Activated naive CD4-positive, alpha-beta T cell treated with anti-CD3 and anti-CD28 coated beads for 36 hours (primary cell): ENCODE measurements at regions of chr11 and their contacts with region 1.

Region 1: DNA sequence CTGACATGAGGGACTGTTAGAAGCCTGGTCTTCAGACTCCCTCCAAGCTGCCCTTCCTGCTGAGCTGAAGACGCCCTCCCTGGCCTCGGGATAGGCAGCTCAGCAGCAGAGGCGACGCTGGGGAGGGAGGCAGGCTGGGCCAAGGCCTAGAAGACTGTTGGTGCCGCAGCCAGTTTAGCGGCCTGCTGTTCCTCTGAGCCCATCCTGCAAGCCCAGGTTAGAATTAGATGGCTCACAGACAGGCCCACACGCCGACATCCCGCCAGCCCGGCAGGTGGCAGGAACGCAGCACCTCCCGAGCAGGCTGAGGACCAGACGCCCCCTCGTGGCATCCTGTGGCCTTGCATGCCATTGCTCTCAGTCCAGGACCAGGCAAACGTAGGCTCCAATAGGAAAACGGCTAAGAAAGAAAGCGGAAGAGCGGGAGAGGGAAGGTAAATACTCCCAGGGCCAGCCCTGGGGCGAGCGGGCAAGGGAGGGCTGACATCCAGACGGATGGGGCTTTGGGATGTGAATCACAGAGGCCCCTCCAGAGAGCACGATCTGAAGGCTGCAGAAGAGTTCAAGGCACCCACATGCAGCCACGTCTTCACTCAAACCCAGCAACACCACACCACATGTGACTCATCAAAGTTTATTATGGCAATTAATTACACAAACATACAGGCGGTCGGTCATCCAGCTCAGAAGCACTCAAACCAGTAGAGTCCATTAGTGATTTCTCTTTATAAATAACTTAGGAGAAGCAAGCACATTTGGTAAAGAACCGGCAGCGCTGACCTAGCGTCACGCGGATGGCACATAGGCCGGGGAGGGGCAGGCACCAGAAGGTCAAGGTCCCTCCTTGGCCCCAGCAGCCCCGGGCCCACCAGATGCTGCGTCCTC is 27.6 kb downstream of the CD5 start:
- DNase-seq: peak; percentile 96
- H3K4me3 Mint-ChIP-seq: peak overlapping the region; percentile 2
- H3K27ac Mint-ChIP-seq: peak overlapping the region; percentile 50
- H3K4me1 Mint-ChIP-seq: peaks cover 21% of the 10 kb centered on the region
- H3K27me3 Mint-ChIP-seq: no peaks in the 10 kb centered on the region

Region 2: GRCh38 chr11:60775420-60775961 is 354.4 kb before region 1 on chr11:
- CTCF ChIA-PET with region 1: no interaction called
- intact Hi-C with region 1: loop called (anchors 1 kb)
- DNase-seq: peak; percentile 93
- H3K4me3 Mint-ChIP-seq: no peak overlapping the region
- H3K27ac Mint-ChIP-seq: no peak overlapping the region
- H3K4me1 Mint-ChIP-seq: peaks cover 7% of the 10 kb centered on the region
- H3K27me3 Mint-ChIP-seq: no peaks in the 10 kb centered on the region

Region 3: DNA sequence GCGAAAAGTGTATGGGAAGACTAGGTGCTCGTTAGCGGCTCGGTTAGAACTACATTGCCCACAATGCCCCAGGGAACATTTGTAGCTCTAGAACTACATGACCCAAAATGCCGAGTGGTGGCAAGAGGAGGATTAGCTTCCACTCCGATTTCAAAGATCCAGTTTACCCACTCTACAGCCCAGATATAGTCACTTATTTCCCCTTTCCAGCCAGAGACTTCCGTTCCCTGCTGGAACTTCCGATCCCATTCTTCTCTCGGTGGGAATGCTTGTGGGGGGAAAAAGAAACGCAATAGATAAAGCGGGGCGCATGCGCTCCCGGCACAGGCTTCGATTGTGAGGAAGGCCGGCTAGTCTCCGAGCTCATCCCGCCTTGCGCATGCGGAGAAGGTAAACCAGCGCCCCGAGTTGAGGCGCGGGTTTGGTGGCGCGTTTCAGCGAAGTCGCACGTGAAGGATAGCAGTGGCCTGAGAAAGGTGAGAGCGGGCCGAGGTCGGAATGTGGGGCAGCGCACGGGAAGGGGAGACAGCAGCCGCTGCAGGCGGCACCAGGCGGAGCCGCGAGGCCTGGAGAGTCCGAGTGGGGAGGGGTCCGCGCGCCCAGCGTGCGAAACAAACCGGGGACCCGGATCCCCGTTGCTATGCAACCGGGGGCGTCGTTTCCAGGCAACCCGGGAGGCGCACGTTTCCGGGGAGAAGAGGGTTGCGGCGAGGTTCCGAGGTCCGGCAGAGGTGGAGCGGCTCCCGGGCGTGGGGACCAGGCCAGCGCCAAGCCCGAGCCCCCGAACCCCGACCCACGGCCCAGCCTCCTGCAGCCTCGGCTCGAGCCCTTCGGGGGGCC is 215.9 kb before region 1 on chr11 and contains the start of gene TMEM109:
- CTCF ChIA-PET with region 1: interaction called, 10 read pairs
- intact Hi-C with region 1: loop called (anchors 1 kb)
- DNase-seq: peak; percentile 89
- H3K4me3 Mint-ChIP-seq: peak within 1 kb of the TSS; percentile 94
- H3K27ac Mint-ChIP-seq: peak within 1 kb of the TSS; percentile 95
- H3K4me1 Mint-ChIP-seq: peaks cover 62% of the 10 kb centered on the region
- H3K27me3 Mint-ChIP-seq: no peaks in the 10 kb centered on the region
- total RNA-seq, gene TMEM109: 94.0 to 103 TPM

Region 4: DNA sequence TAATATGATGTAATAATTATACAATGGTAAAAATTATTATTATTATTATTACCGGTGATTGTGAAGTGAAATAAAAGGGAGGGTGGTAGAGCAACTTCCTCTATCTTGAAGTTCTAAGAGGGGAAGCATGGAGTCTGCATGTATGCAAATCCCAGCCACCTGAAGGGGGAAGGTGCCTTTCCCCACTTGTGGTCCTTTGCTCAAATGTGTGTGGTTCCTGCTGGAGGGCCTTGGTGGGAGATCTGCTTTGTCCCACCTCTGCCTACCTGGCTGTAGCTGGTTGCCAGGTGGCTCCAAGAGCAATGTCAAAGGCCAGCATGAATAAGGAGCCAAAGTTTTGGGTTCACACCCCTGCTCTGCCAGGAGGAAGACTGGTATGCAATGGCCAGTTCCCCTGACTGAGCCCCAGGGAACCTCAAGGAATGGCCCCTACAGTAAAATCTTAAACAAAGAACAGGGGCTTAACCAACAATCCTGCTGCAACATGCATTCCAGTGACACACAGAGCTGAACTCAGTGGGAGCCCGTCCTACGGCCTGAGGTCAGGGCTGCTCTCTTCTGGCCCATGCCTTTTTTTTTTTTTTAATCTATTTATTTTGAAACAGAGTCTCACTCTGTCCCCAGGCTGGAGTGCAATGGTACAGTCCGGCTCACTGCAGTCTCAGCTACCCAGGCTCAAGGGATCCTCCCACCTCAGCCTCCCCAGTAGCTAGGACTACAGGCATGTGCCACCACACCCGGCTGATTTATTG is 197.1 kb before region 1 on chr11:
- CTCF ChIA-PET with region 1: no interaction called
- intact Hi-C with region 1: no loop called
- DNase-seq: no peak
- H3K4me3 Mint-ChIP-seq: no peak overlapping the region
- H3K27ac Mint-ChIP-seq: no peak overlapping the region
- H3K4me1 Mint-ChIP-seq: no peaks in the 10 kb centered on the region
- H3K27me3 Mint-ChIP-seq: no peaks in the 10 kb centered on the region

Region 5: GRCh38 chr11:61021661-61022212 is 108.1 kb before region 1 on chr11:
- CTCF ChIA-PET with region 1: interaction called, 10 read pairs
- intact Hi-C with region 1: no loop called
- DNase-seq: peak; percentile 97
- H3K4me3 Mint-ChIP-seq: peak overlapping the region; percentile 81
- H3K27ac Mint-ChIP-seq: peak overlapping the region; percentile 100
- H3K4me1 Mint-ChIP-seq: peaks cover 78% of the 10 kb centered on the region
- H3K27me3 Mint-ChIP-seq: no peaks in the 10 kb centered on the region

Region 6: DNA sequence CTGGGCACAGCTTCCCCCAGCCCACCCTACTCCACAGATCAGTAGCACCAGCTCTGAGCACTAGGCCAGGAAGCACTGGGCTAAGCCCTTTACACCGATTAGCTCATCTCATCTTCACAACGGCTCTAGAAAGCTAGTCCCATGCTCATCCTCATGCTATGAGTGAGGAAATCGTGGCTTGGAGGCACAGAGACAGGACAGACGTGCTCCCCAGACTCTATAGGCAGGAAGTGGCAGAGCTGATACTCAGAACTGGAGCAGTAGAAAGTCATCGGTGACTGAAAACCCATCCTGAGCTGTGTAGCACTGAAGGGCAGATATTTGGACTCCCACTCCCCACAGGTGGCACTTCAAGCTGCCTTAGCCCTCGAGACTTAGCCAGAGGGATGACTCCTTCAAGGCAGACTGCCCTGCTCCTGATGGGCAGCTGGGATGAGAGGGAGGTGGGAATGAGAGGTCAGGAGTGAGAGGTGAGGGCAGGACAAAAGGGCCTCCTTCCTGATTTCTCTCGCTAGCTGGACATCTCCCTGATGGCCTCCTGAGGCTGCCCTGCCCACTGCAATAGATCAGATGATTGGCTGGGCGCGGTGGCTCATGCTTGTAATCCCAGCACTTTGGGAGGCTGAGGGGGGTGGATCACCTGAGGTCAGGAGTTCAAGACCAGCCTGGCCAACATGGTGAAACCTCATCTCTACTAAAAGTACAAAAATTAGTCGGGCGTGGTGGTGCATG is 17.9 kb before region 1 on chr11:
- CTCF ChIA-PET with region 1: interaction called, 22 read pairs
- intact Hi-C with region 1: no loop called
- DNase-seq: peak; percentile 91
- H3K4me3 Mint-ChIP-seq: peak overlapping the region; percentile 71
- H3K27ac Mint-ChIP-seq: no peak overlapping the region
- H3K4me1 Mint-ChIP-seq: peaks cover 99% of the 10 kb centered on the region
- H3K27me3 Mint-ChIP-seq: no peaks in the 10 kb centered on the region

Region 7: GRCh38 chr11:61187505-61188130 is 57.7 kb after region 1 on chr11:
- CTCF ChIA-PET with region 1: interaction called, 18 read pairs
- intact Hi-C with region 1: loop called (anchors 1 kb)
- DNase-seq: peak; percentile 90
- H3K4me3 Mint-ChIP-seq: no peak overlapping the region
- H3K27ac Mint-ChIP-seq: no peak overlapping the region
- H3K4me1 Mint-ChIP-seq: peaks cover 2% of the 10 kb centered on the region
- H3K27me3 Mint-ChIP-seq: no peaks in the 10 kb centered on the region

Region 8: DNA sequence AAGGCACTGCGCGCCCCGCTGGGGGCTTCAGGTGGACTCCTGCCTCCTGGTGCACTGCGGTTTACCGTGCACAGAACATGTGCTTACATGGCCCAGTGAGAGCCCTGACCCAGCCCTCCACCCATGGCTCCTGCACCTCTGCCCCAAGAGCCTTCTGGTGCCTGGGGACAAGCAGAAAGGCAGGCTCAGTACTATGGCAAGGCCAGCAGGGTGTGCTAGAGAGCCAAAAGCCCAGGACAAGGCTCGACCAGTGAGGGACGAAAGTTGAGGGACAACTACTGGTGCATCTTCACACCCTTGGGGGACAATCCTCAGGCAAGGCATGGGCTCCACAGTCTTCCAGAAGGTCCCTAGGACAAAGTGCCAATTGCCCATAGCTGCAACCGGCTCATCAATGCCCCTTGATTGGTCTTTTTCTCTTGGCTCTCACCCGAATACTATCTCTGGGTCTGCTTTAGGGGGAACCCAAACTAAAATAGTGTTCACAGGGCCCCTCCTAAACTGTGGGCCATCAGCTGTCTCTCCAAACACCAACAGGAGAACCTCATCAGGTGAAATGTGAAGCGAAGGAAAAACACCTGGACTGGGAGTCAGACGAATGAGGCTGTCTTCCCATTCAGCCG is 124.6 kb after region 1 on chr11:
- CTCF ChIA-PET with region 1: no interaction called
- intact Hi-C with region 1: no loop called
- DNase-seq: peak; percentile 80
- H3K4me3 Mint-ChIP-seq: no peak overlapping the region
- H3K27ac Mint-ChIP-seq: no peak overlapping the region
- H3K4me1 Mint-ChIP-seq: no peaks in the 10 kb centered on the region
- H3K27me3 Mint-ChIP-seq: no peaks in the 10 kb centered on the region